ENCODE measurements at regions of chr1 and their contacts with region 1.

Region 1: GRCh38 chr1:230642263-230642959 is at the start of gene COG2:
- DNase-seq: peak; percentile 100
- ATAC-seq: peak; percentile 87
- H3K4me3 Mint-ChIP-seq: peak within 1 kb of the TSS; percentile 98
- H3K27ac Mint-ChIP-seq: peak within 1 kb of the TSS; percentile 96
- H3K4me1 Mint-ChIP-seq: peaks cover 50% of the 10 kb centered on the region
- H3K27me3 Mint-ChIP-seq: peaks cover 8% of the 10 kb centered on the region
- CTCF ChIP-seq: peak; percentile 96
- total RNA-seq, gene COG2: 38.5 and 39.0 TPM in 2 replicates

Region 2: DNA sequence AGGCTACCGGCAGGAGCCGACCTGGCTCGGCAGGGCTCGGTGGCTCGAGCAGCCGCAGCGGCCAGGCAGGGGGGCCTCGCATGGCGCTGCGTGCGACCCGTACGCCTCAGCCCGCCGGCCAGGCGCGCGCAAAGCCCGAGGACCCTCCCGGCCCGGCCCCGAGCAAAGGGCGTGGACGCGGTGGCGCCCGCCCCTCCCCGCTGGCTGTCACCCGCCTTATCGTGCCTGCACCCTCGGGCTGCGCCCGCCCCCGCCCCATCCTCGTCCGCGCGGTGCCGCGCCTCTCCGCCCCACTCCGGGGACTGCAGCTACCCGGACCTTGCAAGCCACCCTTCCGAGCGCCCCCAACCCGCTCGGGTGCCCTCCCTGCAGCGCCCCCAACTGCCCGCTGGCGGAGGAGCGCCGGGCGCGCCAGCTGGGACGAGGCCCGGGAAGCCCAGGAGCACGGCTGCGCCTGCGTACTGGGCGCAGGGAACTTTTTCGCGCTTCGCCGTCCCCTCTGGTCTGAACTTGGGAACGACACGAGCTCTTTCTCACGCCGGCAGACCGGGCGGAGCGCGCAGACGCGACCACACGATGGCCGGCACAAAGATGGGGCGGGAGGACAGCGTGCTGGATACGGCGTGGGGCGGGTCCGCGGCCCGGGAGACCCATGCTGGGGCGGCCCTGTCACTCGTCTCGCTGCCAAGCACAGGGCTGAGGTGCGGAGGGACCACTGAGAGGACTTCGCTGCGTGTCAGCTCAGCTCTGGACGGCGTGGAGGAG is 1083.7 kb before region 1 on chr1 and contains the start of gene ABCB10:
- CTCF ChIA-PET with region 1: no interaction called
- POLR2A ChIA-PET with region 1: no interaction called
- intact Hi-C with region 1: loop called (anchors 2 kb)
- DNase-seq: peak; percentile 91
- ATAC-seq: peak; percentile 80
- H3K4me3 Mint-ChIP-seq: peak within 1 kb of the TSS; percentile 95
- H3K27ac Mint-ChIP-seq: peak within 1 kb of the TSS; percentile 90
- H3K4me1 Mint-ChIP-seq: peaks cover 31% of the 10 kb centered on the region
- H3K27me3 Mint-ChIP-seq: no peaks in the 10 kb centered on the region
- CTCF ChIP-seq: no peak
- total RNA-seq, gene ABCB10: 11.7 and 14.5 TPM in 2 replicates

Region 3: GRCh38 chr1:230930986-230931385 is 288.6 kb after region 1 on chr1:
- CTCF ChIA-PET with region 1: no interaction called
- POLR2A ChIA-PET with region 1: no interaction called
- intact Hi-C with region 1: no loop called
- DNase-seq: no peak
- ATAC-seq: no peak
- H3K4me3 Mint-ChIP-seq: no peak overlapping the region
- H3K27ac Mint-ChIP-seq: no peak overlapping the region
- H3K4me1 Mint-ChIP-seq: no peaks in the 10 kb centered on the region
- H3K27me3 Mint-ChIP-seq: no peaks in the 10 kb centered on the region
- CTCF ChIP-seq: no peak

Region 4: GRCh38 chr1:231040019-231040799 is 397.8 kb after region 1 on chr1 and contains the start of gene FAM89A:
- CTCF ChIA-PET with region 1: no interaction called
- POLR2A ChIA-PET with region 1: interaction called, 3 read pairs
- intact Hi-C with region 1: loop called (anchors 5 kb)
- DNase-seq: peak; percentile 70
- ATAC-seq: peak; percentile 84
- H3K4me3 Mint-ChIP-seq: peak within 1 kb of the TSS; percentile 85
- H3K27ac Mint-ChIP-seq: peak within 1 kb of the TSS; percentile 35
- H3K4me1 Mint-ChIP-seq: peaks cover 17% of the 10 kb centered on the region
- H3K27me3 Mint-ChIP-seq: peaks cover 4% of the 10 kb centered on the region
- CTCF ChIP-seq: no peak
- total RNA-seq, gene FAM89A: 5.2 and 5.3 TPM in 2 replicates

Region 5: GRCh38 chr1:231240883-231241735 is 598.7 kb after region 1 on chr1 and contains the start of gene GNPAT:
- CTCF ChIA-PET with region 1: no interaction called
- POLR2A ChIA-PET with region 1: interaction called, 3 read pairs
- intact Hi-C with region 1: loop called (anchors 1 kb)
- DNase-seq: peak; percentile 94
- ATAC-seq: peak; percentile 98
- H3K4me3 Mint-ChIP-seq: peak within 1 kb of the TSS; percentile 93
- H3K27ac Mint-ChIP-seq: peak within 1 kb of the TSS; percentile 94
- H3K4me1 Mint-ChIP-seq: peaks cover 58% of the 10 kb centered on the region
- H3K27me3 Mint-ChIP-seq: no peaks in the 10 kb centered on the region
- CTCF ChIP-seq: no peak
- total RNA-seq, gene GNPAT: 45.7 and 47.4 TPM in 2 replicates

Region 6: DNA sequence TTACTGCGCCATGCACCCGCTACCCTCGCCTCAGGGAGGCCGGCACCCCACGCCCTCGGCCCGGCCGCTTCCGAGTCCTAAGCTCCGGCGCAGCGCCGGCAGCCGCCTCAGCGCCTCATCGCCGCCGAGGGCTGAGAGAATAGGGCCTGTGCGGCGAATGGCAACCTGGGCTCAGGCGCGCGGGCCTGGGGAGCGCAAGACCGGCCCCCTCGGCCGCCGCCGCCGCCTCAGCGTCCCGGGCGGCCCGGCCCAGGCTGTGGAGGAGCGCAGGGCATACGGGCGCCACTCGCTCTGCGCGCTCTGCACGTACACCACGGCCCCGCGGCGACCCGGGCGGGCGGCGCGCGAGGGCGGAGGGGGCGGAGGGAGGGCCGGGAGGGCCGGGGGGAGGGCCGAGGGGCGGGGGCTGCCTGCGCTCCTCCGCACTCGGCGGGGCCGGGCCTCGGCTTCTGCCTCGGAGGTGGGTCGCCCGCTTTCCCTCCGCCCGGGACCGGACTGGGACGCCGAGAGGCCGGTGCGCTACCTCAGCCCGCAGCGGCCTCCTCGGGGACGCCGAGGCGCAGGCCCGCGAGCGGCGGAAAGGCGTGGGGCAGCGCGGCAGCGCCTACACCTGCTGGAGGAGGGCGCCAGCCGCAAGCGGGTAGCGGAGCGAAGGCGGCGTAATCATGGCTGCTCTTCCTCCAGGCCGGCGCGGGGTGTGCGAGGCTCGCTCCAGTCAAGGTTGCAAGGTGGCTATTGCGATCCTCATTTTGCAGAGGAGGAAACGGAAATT is 779.8 kb after region 1 on chr1 and contains the start of gene EGLN1:
- CTCF ChIA-PET with region 1: no interaction called
- POLR2A ChIA-PET with region 1: no interaction called
- intact Hi-C with region 1: loop called (anchors 1 kb)
- DNase-seq: peak; percentile 82
- ATAC-seq: peak; percentile 84
- H3K4me3 Mint-ChIP-seq: peak within 1 kb of the TSS; percentile 97
- H3K27ac Mint-ChIP-seq: peak within 1 kb of the TSS; percentile 91
- H3K4me1 Mint-ChIP-seq: peaks cover 43% of the 10 kb centered on the region
- H3K27me3 Mint-ChIP-seq: no peaks in the 10 kb centered on the region
- CTCF ChIP-seq: no peak
- total RNA-seq, gene EGLN1: 10.7 and 15.6 TPM in 2 replicates

Region 7: GRCh38 chr1:231612393-231613089 is 970.1 kb after region 1 on chr1:
- CTCF ChIA-PET with region 1: no interaction called
- POLR2A ChIA-PET with region 1: no interaction called
- intact Hi-C with region 1: loop called (anchors 5 kb)
- DNase-seq: peak; percentile 51
- ATAC-seq: peak; percentile 93
- H3K4me3 Mint-ChIP-seq: peak overlapping the region; percentile 68
- H3K27ac Mint-ChIP-seq: peak overlapping the region; percentile 78
- H3K4me1 Mint-ChIP-seq: peaks cover 65% of the 10 kb centered on the region
- H3K27me3 Mint-ChIP-seq: peaks cover 3% of the 10 kb centered on the region
- CTCF ChIP-seq: no peak